HepG2 (cell line): ENCODE measurements at regions of chr20 and their contacts with region 1.

Region 1: GRCh38 chr20:23721962-23722361 is 28.8 kb downstream of the CST1 start:
- DNase-seq: no peak
- ATAC-seq: no peak
- H3K4me3 ChIP-seq: no peak overlapping the region
- H3K27ac ChIP-seq: no peak overlapping the region
- H3K4me1 ChIP-seq: no peaks in the 10 kb centered on the region
- H3K27me3 ChIP-seq: peaks cover 0 to 3% of the 10 kb centered on the region in 2 experiments; a peak in 2 of 5 replicates
- CTCF ChIP-seq: no peak
- EP300 ChIP-seq: no peak
- POLR2A ChIP-seq: no peak
- RAD21 ChIP-seq: no peak

Region 2: GRCh38 chr20:23441850-23442313 is 280.1 kb before region 1 on chr20:
- CTCF ChIA-PET with region 1: no interaction called
- POLR2A ChIA-PET with region 1: no interaction called
- in situ Hi-C with region 1: no loop called
- intact Hi-C with region 1: loop called (anchors 5 kb)
- DNase-seq: peak; percentile 84
- ATAC-seq: peak; percentile 88
- H3K4me3 ChIP-seq: no peak overlapping the region
- H3K27ac ChIP-seq: no peak overlapping the region
- H3K4me1 ChIP-seq: peaks cover 19% of the 10 kb centered on the region
- H3K27me3 ChIP-seq: peaks cover 0 to 11% of the 10 kb centered on the region in 2 experiments; a peak in 2 of 5 replicates
- CTCF ChIP-seq: peak; percentile 99
- EP300 ChIP-seq: no peak
- POLR2A ChIP-seq: no peak
- RAD21 ChIP-seq: peak; percentile 89